ENCODE measurements at regions of chr3 and their contacts with region 1.

Region 1: GRCh38 chr3:11185564-11186317 is 31.4 kb downstream of the HRH1 start:
- DNase-seq: peak; percentile 97
- H3K4me3 ChIP-seq: no peak overlapping the region
- H3K27ac ChIP-seq: peak overlapping the region; percentile 64
- H3K4me1 ChIP-seq: peaks cover 45% of the 10 kb centered on the region
- H3K27me3 ChIP-seq: no peaks in the 10 kb centered on the region
- CTCF ChIP-seq: no peak
- POLR2A ChIP-seq: no peak

Region 2: GRCh38 chr3:11195721-11196332 is 10.1 kb after region 1 on chr3:
- CTCF ChIA-PET with region 1: interaction called, 19 read pairs
- POLR2A ChIA-PET with region 1: interaction called, 23 read pairs
- dilution Hi-C with region 1: no loop called
- intact Hi-C with region 1: loop called (anchors 1 kb)
- DNase-seq: peak; percentile 65
- H3K4me3 ChIP-seq: no peak overlapping the region
- H3K27ac ChIP-seq: peak overlapping the region; percentile 67
- H3K4me1 ChIP-seq: peaks cover 61% of the 10 kb centered on the region
- H3K27me3 ChIP-seq: no peaks in the 10 kb centered on the region
- CTCF ChIP-seq: no peak
- POLR2A ChIP-seq: peak; percentile 65

Region 3: GRCh38 chr3:11221818-11222415 is 36.2 kb after region 1 on chr3:
- CTCF ChIA-PET with region 1: interaction called, 3 read pairs
- POLR2A ChIA-PET with region 1: no interaction called
- dilution Hi-C with region 1: no loop called
- intact Hi-C with region 1: loop called (anchors 1 kb)
- DNase-seq: no peak
- H3K4me3 ChIP-seq: no peak overlapping the region
- H3K27ac ChIP-seq: no peak overlapping the region
- H3K4me1 ChIP-seq: peaks cover 40% of the 10 kb centered on the region
- H3K27me3 ChIP-seq: no peaks in the 10 kb centered on the region
- CTCF ChIP-seq: peak; percentile 5 to 11
- POLR2A ChIP-seq: no peak

Region 4: DNA sequence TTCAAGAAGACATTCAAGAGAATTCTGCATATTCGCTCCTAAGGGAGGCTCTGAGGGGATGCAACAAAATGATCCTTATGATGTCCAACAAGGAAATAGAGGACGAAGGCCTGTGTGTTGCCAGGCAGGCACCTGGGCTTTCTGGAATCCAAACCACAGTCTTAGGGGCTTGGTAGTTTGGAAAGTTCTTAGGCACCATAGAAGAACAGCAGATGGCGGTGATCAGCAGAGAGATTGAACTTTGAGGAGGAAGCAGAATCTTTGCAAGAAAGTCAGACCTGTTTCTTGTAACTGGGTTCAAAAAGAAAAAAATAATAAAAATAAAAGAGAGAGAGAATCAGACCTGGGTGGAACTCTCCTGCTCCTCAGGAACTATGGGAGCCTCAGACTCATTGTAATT is 74.7 kb after region 1 on chr3:
- CTCF ChIA-PET with region 1: no interaction called
- POLR2A ChIA-PET with region 1: no interaction called
- dilution Hi-C with region 1: no loop called
- intact Hi-C with region 1: no loop called
- DNase-seq: no peak
- H3K4me3 ChIP-seq: no peak overlapping the region
- H3K27ac ChIP-seq: no peak overlapping the region
- H3K4me1 ChIP-seq: no peaks in the 10 kb centered on the region
- H3K27me3 ChIP-seq: no peaks in the 10 kb centered on the region
- CTCF ChIP-seq: no peak
- POLR2A ChIP-seq: no peak

Region 5: GRCh38 chr3:11719406-11720230 is 533.9 kb after region 1 on chr3:
- CTCF ChIA-PET with region 1: no interaction called
- POLR2A ChIA-PET with region 1: no interaction called
- dilution Hi-C with region 1: no loop called
- intact Hi-C with region 1: no loop called
- DNase-seq: peak; percentile 66
- H3K4me3 ChIP-seq: peak overlapping the region; percentile 92 to 96 (median 93)
- H3K27ac ChIP-seq: peak overlapping the region; percentile 76
- H3K4me1 ChIP-seq: peaks cover 21% of the 10 kb centered on the region
- H3K27me3 ChIP-seq: peaks cover under 1 to 9% of the 10 kb centered on the region in 2 experiments
- CTCF ChIP-seq: no peak
- POLR2A ChIP-seq: no peak